Natural killer cell (primary cell): ENCODE measurements at regions of chr12 and their contacts with region 1.

Region 1: DNA sequence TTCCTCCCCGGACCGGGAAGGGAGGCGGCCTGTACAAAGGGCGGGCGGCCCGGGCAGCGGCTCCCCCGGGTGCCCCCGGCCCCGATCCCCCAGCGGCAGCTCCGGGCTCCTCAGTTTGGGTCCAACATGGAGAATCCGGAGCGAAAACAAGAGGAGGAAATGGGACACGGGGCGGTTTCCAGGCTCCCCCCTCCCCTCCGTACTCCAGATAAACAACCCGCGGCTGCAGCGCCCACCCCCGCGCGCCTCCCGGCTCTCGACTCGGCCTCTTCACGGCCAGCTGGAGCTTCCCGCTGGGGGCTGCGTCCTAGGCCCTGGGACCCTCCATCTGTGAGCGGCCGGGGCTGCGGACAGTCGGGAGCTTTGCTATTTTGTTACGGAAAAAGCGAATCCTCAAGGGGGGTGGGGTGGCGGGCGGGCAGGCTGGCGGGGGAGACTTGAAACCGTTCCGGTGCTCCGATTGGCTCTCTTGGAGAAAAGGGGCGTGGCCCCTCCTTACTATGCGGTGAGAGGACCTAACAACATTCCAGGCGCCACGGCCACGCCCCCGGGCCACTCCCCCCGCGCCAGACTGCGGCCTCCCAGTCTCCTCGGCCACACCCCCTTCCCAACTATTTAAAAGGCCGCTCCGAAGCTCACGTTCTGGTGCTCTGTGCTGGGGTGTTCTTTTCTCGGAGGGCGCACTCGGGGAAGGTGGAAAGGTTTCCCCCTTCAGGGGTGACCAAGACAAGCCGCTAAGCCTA is at the start of gene CTDSP2:
- DNase-seq: peak; percentile 71 to 91
- ATAC-seq: peak; percentile 28 to 60 (median 50)
- H3K4me3 ChIP-seq: peak within 1 kb of the TSS; percentile 99
- H3K4me3 Mint-ChIP-seq: peak within 1 kb of the TSS; percentile 86
- H3K27ac ChIP-seq: peak within 1 kb of the TSS; percentile 81
- H3K27ac Mint-ChIP-seq: peak within 1 kb of the TSS; percentile 69 to 95
- H3K4me1 ChIP-seq: peaks cover 33% of the 10 kb centered on the region
- H3K4me1 Mint-ChIP-seq: peaks cover 29 to 47% of the 10 kb centered on the region in 2 donors
- H3K27me3 ChIP-seq: no peaks in the 10 kb centered on the region
- H3K27me3 Mint-ChIP-seq: peaks cover 9% of the 10 kb centered on the region in 2 donors
- CTCF ChIP-seq: no peak
- total RNA-seq, gene CTDSP2: 93.8 to 135 (median 123) TPM

Region 2: DNA sequence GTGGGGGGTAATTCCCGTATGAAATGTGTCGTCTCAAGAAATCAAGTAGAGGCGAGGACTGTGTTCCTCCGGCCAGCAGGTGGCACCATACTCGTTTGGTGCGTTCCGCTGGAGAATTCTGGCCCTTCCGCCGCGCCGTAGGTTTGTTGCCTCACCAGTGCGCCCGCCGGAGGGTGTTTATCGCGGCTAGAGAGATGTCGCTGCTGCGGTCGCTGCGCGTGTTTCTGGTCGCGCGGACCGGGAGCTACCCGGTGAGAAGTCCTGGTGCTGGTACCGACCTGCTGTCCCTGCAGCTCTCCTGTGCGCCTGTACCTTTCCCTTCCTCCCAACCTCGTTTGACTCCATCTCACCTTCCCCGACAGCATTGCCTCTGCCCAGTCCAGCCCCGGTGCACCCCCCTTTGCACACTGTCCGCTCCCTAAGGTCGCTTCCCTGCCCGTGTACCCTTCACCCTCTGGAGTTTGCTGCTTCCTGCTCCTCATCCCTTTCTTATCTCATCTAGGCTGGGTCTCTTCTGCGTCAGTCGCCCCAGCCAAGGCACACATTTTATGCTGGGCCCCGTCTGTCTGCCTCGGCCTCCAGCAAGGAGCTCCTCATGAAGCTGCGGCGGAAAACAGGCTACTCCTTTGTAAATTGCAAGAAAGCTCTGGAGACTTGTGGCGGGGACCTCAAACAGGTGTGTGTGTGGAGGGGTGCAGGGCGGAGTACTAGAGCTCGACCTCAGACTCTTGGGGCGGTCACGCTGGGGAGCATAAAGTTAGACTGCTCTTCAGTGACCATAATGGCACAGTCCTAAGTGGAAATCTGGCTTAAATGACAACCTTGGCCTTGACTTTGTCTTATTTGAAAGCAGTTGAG is 63.9 kb before region 1 on chr12 and contains the start of gene TSFM:
- intact Hi-C with region 1: loop called (anchors 5 kb)
- DNase-seq: peak; percentile 98 to 99
- ATAC-seq: peak; percentile 94 to 97 (median 97)
- H3K4me3 ChIP-seq: peak within 1 kb of the TSS; percentile 86
- H3K4me3 Mint-ChIP-seq: peak within 1 kb of the TSS; percentile 99
- H3K27ac ChIP-seq: peak within 1 kb of the TSS; percentile 57
- H3K27ac Mint-ChIP-seq: peak within 1 kb of the TSS; percentile 90 to 97
- H3K4me1 ChIP-seq: peaks cover 36% of the 10 kb centered on the region
- H3K4me1 Mint-ChIP-seq: peaks cover 33 to 34% of the 10 kb centered on the region in 2 donors
- H3K27me3 ChIP-seq: no peaks in the 10 kb centered on the region
- H3K27me3 Mint-ChIP-seq: no peaks in the 10 kb centered on the region
- CTCF ChIP-seq: peak; percentile 93
- total RNA-seq, gene TSFM: 17.6 to 19.7 (median 17.7) TPM

Region 3: GRCh38 chr12:57793920-57794319 is 52.8 kb before region 1 on chr12:
- intact Hi-C with region 1: no loop called
- DNase-seq: no peak
- ATAC-seq: no peak
- H3K4me3 ChIP-seq: no peak overlapping the region
- H3K4me3 Mint-ChIP-seq: no peak overlapping the region
- H3K27ac ChIP-seq: no peak overlapping the region
- H3K27ac Mint-ChIP-seq: no peak overlapping the region
- H3K4me1 ChIP-seq: no peaks in the 10 kb centered on the region
- H3K4me1 Mint-ChIP-seq: no peaks in the 10 kb centered on the region
- H3K27me3 ChIP-seq: no peaks in the 10 kb centered on the region
- H3K27me3 Mint-ChIP-seq: no peaks in the 10 kb centered on the region
- CTCF ChIP-seq: no peak